Right ventricle myocardium inferior (tissue), 1 donor: ENCODE measurements at regions of chr6 and their contacts with region 1.

Region 1: DNA sequence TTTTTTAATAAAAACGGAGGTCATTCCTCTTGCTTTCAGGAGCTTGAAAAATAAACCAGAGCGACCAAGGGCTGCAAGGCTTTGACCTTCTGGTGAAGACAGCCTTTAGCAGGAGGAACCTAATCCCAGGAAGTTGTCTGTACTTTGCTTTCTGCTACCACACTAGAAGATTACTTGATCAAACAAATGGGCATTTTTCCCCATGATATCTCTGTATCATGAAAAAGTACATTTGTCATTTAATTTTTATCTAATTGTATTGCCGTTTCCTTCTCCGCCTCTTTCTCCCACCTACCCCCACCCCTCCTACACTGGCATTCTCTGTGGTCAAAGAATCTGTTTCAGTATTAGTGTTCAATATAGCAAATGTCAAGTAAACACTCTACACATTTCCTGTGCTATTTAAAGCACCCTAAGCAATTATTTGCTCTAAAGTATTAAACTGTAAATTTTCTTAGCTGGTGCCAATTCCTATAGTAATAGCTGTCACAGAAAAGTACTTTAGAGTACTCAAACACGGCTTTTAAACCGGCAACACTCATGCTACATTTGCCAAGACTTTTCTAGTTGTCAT is 29.7 kb downstream of the ATXN1 start:
- DNase-seq: no peak
- ATAC-seq: no peak

Region 2: DNA sequence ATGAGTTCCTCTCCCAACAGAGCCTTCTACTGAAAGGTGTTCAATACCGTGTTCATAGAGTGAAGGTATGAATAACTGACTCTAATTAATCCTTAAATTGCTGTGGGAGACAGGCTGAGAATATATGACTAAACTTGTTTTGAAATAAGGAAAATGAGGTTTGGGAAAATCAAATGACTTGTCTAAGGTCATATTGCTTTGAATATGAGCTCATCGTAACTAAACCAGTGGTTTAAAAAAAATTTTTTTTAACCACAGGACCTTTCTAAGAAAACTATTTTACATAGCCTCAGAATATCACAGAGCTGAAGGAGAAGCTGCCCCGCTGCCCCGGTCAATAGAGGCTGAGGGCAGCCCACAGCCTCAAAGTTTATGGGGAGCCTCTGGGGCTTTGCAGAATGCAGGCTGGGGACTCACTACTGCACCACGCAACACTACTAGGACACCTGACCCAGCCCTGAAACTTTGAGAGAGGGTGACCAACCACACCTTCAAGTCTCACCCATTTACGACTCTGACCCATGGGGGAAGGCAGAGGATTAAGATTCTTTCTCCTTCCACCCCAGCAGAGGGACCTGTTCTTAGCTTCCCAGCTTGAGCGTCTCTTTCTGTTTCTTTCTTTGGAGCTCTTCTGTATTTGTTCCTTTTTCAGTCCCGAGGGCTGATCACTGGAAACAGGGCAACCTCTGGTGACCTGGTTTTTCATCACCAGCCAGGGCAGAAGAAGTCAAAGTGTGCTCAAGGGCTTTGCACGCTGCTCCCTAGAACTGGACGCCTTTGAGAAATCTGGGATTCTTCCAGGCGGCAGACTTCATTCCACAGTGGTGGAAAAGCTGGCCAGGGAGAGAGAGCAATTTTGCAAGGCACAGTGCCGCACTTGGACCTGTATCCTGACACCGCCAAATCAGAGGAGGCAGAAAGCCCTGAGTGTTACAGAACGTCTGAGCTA is 190.5 kb before region 1 on chr6:
- intact Hi-C with region 1: loop called (anchors 10 kb)
- DNase-seq: no peak
- ATAC-seq: peak; percentile 74